Panc1 (cell line): ENCODE measurements at regions of chr1 and their contacts with region 1.

Region 1: GRCh38 chr1:103477101-103477500 is 48.4 kb upstream of the RNPC3 start:
- DNase-seq: no peak
- ATAC-seq: no peak
- H3K4me3 ChIP-seq: no peak overlapping the region
- H3K27ac ChIP-seq: no peak overlapping the region
- H3K4me1 ChIP-seq: no peaks in the 10 kb centered on the region
- H3K27me3 ChIP-seq: no peaks in the 10 kb centered on the region
- CTCF ChIP-seq: no peak

Region 2: DNA sequence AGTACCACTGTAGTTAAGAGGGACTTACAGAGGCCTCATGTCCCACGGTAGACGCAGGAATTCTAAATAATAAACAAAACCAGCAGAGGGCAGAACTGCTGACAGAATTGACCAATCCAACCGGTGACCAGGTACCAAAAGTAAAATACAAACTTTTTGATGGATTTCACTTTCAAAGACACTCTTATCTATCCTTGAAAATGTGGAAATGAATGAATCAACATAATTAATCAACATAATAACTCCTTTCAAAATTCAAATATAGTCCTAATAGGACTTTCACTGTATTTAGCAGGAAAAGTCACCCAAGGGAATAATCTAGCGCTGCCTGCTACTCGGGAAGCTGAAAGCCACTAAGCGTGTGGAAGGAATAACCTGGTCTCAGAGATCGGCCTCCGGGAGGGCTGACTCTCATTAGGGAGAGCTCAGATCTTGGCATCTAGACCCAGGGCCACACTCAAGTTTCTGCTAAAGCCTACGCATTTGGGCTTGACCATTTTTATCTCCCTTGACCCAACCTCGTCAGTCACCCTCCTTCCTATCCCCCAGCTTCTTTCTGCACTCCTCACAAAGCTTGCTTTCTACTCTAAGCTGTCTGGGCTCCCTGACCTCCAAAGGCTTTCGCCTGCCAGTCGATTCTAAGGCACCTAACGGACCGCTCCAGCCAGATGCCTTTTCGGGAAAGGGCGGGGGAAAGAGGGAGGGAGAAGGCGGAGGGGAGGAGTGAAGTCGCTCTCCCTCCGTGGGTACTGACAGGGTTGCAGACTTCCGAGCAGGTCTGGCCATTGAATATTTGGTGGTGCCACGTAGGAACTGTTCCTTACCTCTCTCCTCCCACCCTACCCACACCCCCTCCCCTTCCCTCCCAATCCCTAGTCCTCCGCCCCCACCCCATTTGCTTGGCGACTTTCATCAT is 370.4 kb before region 1 on chr1:
- CTCF ChIA-PET with region 1: no interaction called
- POLR2A ChIA-PET with region 1: interaction called, 13 read pairs
- in situ Hi-C with region 1: no loop called
- intact Hi-C with region 1: no loop called
- DNase-seq: peak; percentile 45
- ATAC-seq: peak; percentile 86
- H3K4me3 ChIP-seq: peak overlapping the region; percentile 60 to 72
- H3K27ac ChIP-seq: peak overlapping the region; percentile 82
- H3K4me1 ChIP-seq: no peaks in the 10 kb centered on the region; the same call in 1 of the 2 replicates
- H3K27me3 ChIP-seq: no peaks in the 10 kb centered on the region
- CTCF ChIP-seq: peak; percentile 57; the same call in 1 of the 2 replicates

Region 3: DNA sequence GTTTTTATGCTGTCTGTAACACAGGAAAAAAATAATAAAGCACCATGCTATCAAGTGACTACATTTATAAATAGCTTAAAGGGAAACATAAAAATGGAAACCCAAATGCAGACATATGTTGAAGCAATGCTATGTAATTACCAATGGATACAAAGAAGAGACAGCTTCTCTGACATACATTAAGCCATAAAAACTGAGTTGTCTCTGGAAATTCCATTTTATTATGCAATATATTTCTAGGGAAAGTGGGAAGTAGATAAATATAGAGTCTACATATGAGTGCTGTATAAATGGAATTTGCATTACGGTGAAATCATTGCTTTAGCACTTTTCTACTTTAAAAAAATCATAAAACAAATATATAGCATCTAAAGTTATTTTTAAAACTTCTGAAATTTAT is 233.6 kb before region 1 on chr1:
- CTCF ChIA-PET with region 1: no interaction called
- POLR2A ChIA-PET with region 1: no interaction called
- in situ Hi-C with region 1: no loop called
- intact Hi-C with region 1: no loop called
- DNase-seq: no peak
- ATAC-seq: no peak
- H3K4me3 ChIP-seq: no peak overlapping the region
- H3K27ac ChIP-seq: no peak overlapping the region
- H3K4me1 ChIP-seq: no peaks in the 10 kb centered on the region
- H3K27me3 ChIP-seq: no peaks in the 10 kb centered on the region
- CTCF ChIP-seq: no peak